ENCODE measurements at regions of chr20 and their contacts with region 1.

Region 1: DNA sequence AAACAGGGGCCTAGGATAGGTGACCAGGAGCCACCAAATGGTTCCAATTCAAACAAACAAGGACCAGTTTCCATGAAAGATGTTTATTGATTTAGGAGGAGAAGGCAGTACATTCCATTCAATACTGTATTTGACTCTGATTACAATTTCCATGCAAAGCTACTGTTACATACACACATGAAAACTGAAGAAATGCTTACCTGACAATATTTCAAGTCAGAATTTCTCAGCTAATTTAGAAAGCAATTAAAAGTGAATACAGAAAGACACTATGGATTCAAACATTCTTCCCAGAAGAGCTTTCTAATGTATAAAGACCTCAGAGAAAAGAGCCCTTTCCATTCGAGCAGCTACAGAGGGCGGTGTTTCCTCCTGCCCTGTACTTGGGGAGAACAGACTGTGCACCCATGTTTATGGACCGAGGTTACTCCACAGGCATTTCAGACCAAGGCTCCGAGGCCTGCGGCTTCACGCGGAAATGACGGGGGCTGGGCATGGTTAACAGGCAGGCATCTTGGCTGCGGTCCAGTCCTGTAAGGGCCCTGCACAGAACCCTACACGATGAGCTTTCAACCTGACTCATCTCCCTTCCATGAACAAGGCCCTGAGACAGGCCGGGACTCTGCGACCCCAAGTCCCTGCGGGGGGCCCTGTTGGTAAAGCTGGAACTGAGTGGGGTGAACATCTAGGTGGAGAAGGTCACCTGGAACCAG is 25.7 kb upstream of the TCFL5 start:
- DNase-seq: peak; percentile 82
- H3K4me3 ChIP-seq: no peak overlapping the region
- H3K27ac ChIP-seq: peak overlapping the region; percentile 78
- H3K27me3 ChIP-seq: no peaks in the 10 kb centered on the region
- CTCF ChIP-seq: peak; percentile 27; the same call in 1 of the 2 replicates

Region 2: DNA sequence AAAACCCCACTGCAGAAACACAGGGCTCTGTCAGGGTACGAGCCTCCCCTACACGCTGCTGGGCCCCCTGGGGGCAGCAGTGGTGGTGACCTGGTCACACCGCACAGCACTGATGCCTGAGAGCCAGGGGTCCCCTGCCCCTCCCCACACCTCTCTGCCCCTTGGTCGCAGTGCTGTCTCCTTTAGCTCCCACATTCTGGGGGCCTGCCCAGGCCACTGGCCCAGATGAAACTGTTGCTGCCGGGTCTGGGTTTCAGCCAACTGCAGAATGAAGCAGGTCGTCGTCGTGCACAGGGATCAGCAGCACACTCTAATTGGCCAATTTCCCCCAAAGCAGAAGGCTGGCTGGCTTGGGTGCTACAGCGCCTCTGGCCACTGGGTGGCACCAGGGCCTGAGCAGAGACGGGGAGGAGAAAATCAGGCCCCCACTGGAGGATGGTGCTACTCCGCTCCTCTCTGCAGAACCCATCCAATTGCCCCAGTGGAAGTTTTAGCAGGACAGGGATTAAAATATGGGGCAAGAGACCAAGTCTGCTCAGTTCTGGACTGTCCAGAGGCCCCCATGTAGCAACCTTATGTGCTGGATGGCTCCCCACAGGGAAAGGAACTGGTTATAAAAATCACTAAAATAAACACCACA is 12.9 kb after region 1 on chr20:
- CTCF ChIA-PET with region 1: interaction called, 40 read pairs
- POLR2A ChIA-PET with region 1: interaction called, 3 read pairs
- DNase-seq: peak; percentile 33
- H3K4me3 ChIP-seq: no peak overlapping the region
- H3K27ac ChIP-seq: no peak overlapping the region
- H3K27me3 ChIP-seq: no peaks in the 10 kb centered on the region
- CTCF ChIP-seq: peak; percentile 88